ENCODE measurements at regions of chrX and their contacts with region 1.

Region 1: DNA sequence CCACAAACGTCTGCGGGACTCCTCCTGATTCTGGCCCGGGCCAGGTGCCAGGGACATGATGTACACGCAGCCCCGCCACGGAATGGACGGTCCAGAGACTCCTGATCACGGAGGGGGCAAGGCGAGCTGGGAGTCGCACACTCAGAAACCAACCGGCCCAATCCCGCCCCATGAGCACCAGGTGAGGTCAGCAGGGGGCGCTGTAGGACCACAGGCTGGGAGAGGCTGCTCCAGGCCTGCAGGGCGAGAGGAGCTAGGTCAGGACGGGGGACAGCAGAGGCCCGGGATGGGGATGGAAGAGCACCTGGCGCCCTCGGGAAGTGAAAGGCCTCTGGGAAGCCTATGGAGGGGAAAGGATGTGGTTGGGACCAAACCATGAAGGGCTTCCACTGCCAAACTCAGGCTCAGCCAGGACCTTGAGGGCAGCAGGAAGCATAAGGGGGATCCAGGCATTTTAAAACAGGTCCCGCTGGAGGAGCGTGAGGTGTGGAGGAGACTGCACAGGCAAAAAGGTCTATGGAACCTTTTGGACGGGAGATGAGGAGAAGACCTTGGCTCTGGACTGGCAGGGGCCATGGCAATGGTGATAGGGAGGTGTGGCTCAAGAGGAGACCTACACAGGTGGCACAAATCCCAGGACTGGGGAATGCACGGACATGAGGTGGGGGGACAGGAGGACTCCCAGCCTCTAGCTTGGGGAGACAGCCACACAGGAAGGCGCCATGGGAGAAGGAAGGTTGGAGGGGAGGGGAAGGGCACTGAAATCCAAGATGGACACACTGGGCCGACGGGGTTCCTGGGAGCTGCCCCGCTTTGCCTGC is 79.2 kb downstream of the MTMR1 start:
- DNase-seq: peak; percentile 85
- H3K4me3 ChIP-seq: no peak overlapping the region
- H3K27ac ChIP-seq: no peak overlapping the region
- H3K4me1 ChIP-seq: no peaks in the 10 kb centered on the region
- H3K27me3 ChIP-seq: no peaks in the 10 kb centered on the region
- CTCF ChIP-seq: peak; percentile 62 to 75 (median 70)
- EP300 ChIP-seq: no peak
- POLR2A ChIP-seq: no peak

Region 2: GRCh38 chrX:150806827-150807226 is 34.5 kb after region 1 on chrX:
- intact Hi-C with region 1: loop called (anchors 1 kb)
- DNase-seq: no peak
- H3K4me3 ChIP-seq: no peak overlapping the region
- H3K27ac ChIP-seq: no peak overlapping the region
- H3K4me1 ChIP-seq: no peaks in the 10 kb centered on the region
- H3K27me3 ChIP-seq: no peaks in the 10 kb centered on the region
- CTCF ChIP-seq: no peak
- EP300 ChIP-seq: no peak
- POLR2A ChIP-seq: no peak

Region 3: GRCh38 chrX:151082076-151082948 is 310.0 kb after region 1 on chrX:
- intact Hi-C with region 1: loop called (anchors 1 kb)
- DNase-seq: peak; percentile 72
- H3K4me3 ChIP-seq: peak overlapping the region in 2 of 4 donors; percentile 10 to 12
- H3K27ac ChIP-seq: no peak overlapping the region
- H3K4me1 ChIP-seq: peaks cover 0 to 6% (median 0%) of the 10 kb centered on the region in 4 donors
- H3K27me3 ChIP-seq: no peaks in the 10 kb centered on the region
- CTCF ChIP-seq: peak; percentile 57 to 88 (median 80)
- EP300 ChIP-seq: no peak
- POLR2A ChIP-seq: no peak

Measured in sigmoid colon (tissue), 7 donors.